ENCODE measurements at regions of chr6 and their contacts with region 1.

Region 1: DNA sequence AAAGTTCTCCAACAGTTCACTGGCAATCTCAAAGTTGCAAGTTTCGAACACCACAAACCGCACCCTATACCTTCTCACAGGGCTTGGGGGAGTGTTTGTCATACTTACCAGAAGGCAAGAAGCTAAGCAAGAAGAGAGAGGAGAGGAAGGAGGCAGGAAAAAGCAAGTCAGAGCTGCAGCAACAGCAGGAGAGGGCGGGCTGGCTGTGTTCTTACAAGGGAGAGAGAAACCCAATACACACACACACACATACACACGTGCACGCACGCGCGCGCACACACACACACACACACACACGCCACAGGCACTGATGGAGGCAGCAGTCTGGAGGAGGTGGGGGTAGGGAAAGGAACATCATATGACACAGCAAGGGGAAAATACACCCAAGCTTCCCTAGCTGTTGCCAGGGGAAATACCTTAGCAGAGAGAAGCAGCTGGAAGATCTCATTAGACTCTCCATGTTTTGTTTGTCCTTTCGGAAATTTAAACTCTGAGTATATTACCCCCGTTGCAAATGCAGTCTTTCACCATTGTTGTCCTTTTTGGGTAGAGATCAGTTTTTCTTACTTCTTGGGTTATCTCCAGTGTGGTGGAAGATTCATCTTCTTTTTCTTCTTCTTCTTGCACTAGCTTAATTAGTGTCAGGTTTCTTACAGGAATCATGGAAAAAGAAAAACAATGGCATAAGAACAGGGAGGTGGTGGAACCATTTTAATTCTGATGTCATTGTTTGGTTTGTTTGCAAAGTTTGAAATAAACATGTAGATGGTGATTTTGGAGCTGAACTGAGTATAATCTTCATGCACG is at the start of gene TXLNB:
- DNase-seq: peak; percentile 64 to 89
- ATAC-seq: peak; percentile 76 to 86 (median 80)
- H3K4me3 ChIP-seq: peak within 1 kb of the TSS; percentile 14
- H3K4me3 Mint-ChIP-seq: peak within 1 kb of the TSS; percentile 96
- H3K27ac ChIP-seq: peak within 1 kb of the TSS; percentile 97
- H3K27ac Mint-ChIP-seq: peak within 1 kb of the TSS; percentile 93 to 99
- H3K4me1 ChIP-seq: peaks cover 28% of the 10 kb centered on the region
- H3K4me1 Mint-ChIP-seq: peaks cover 34 to 46% of the 10 kb centered on the region in 2 donors
- H3K27me3 ChIP-seq: no peaks in the 10 kb centered on the region
- H3K27me3 Mint-ChIP-seq: no peaks in the 10 kb centered on the region
- CTCF ChIP-seq: no peak
- total RNA-seq, gene TXLNB: 0.24 to 0.93 (median 0.50) TPM

Region 2: GRCh38 chr6:139028658-139029469 is 263.2 kb before region 1 on chr6 and contains the start of gene ABRACL:
- intact Hi-C with region 1: loop called (anchors 5 kb)
- DNase-seq: peak; percentile 47 to 88
- ATAC-seq: peak; percentile 64 to 80 (median 68)
- H3K4me3 ChIP-seq: peak within 1 kb of the TSS; percentile 99
- H3K4me3 Mint-ChIP-seq: no peak within 1 kb of the TSS
- H3K27ac ChIP-seq: peak within 1 kb of the TSS; percentile 91
- H3K27ac Mint-ChIP-seq: peak within 1 kb of the TSS in 1 of 2 donors; percentile 65
- H3K4me1 ChIP-seq: peaks cover 23% of the 10 kb centered on the region
- H3K4me1 Mint-ChIP-seq: peaks cover 24 to 32% of the 10 kb centered on the region in 2 donors
- H3K27me3 ChIP-seq: no peaks in the 10 kb centered on the region
- H3K27me3 Mint-ChIP-seq: no peaks in the 10 kb centered on the region
- CTCF ChIP-seq: no peak
- total RNA-seq, gene ABRACL: 36.4 to 39.9 (median 37.5) TPM

Region 3: DNA sequence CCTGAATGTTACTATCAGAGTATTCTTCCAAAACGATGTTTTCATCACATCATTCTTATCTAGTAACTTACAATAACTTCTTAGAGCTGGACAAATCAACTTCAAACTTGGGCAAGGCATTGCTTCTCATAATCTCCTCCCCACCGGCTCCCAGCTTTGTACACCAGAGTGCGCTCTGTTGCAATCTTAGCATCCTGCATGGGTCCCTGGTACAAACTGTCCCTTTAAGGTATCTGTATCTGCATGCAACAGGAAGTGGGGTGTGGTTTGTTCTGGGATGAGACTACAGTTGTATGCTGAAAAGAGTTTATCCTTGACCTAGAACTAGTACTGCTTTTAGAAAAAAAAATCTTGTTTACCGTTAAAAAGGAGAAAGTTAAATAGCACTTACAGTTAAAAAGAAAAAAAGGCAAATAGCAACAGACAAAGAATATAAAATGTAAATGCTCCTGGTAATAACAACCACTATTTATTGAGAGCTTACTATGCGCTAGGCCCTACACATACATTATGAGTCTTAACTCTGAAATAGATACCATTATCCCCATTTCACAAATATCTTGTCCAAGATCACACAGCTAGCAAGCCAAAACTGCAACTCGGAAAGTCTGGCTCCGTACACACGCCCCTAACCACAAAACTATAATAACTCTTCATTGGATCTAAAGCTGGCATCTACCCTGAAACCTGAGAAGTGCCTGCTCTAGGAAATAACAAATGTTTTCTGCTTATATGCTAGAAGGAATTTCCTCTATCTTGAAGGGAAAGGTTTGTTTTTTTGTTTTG is 166.9 kb before region 1 on chr6:
- intact Hi-C with region 1: loop called (anchors 5 kb)
- DNase-seq: peak; percentile 54 to 93
- ATAC-seq: peak; percentile 99 to 100 (median 99)
- H3K4me3 ChIP-seq: no peak overlapping the region
- H3K4me3 Mint-ChIP-seq: peak overlapping the region; percentile 81
- H3K27ac ChIP-seq: peak overlapping the region; percentile 42
- H3K27ac Mint-ChIP-seq: peak overlapping the region; percentile 84 to 91
- H3K4me1 ChIP-seq: peaks cover 17% of the 10 kb centered on the region
- H3K4me1 Mint-ChIP-seq: peaks cover 25% of the 10 kb centered on the region in 2 donors
- H3K27me3 ChIP-seq: no peaks in the 10 kb centered on the region
- H3K27me3 Mint-ChIP-seq: no peaks in the 10 kb centered on the region
- CTCF ChIP-seq: peak; percentile 67

Region 4: DNA sequence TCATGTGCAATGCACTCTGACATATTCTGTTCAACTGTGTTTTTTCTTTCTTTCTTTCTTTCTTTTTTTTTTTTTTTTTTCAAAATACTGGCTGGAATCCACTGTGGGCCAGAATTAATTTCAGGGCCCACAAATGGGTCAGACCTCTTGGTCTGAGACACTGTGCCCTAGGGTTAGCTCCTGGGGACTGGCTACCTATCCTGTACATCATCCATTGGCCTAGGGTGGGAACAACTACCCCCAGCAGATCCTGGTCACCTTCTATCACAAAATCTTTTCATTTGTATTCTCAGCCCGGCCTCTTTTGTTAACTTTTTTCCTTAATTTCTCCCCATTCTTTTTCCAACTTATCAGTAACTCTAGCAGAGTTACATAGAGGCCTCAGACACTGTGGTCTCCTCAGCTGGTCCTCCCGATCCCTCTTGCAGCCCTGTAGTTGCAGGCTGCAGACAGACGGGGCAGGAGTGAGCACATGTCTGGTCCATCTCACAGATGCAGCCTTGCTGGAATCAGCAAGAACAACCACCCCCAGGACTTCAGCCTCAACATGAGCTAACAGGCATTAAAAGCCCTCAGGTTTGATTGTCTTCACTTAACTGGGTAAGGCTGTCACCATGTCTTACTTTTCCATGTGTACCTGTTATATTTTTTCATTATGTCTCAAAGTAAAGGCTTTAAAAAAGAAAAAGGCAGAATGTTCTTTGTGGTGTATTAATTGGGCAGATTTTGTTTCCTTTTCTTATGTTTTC is 41.5 kb before region 1 on chr6:
- intact Hi-C with region 1: loop called (anchors 2 kb)
- DNase-seq: peak; percentile 34 to 80
- ATAC-seq: peak; percentile 90 to 100 (median 99)
- H3K4me3 ChIP-seq: no peak overlapping the region
- H3K4me3 Mint-ChIP-seq: no peak overlapping the region
- H3K27ac ChIP-seq: peak overlapping the region; percentile 13
- H3K27ac Mint-ChIP-seq: peak overlapping the region; percentile 37 to 47
- H3K4me1 ChIP-seq: peaks cover 5% of the 10 kb centered on the region
- H3K4me1 Mint-ChIP-seq: peaks cover 21 to 26% of the 10 kb centered on the region in 2 donors
- H3K27me3 ChIP-seq: no peaks in the 10 kb centered on the region
- H3K27me3 Mint-ChIP-seq: no peaks in the 10 kb centered on the region
- CTCF ChIP-seq: peak; percentile 67

Region 5: GRCh38 chr6:139323511-139324300 is 31.7 kb after region 1 on chr6:
- intact Hi-C with region 1: loop called (anchors 1 kb)
- DNase-seq: peak; percentile 70 to 90
- ATAC-seq: peak; percentile 79 to 85 (median 82)
- H3K4me3 ChIP-seq: peak overlapping the region; percentile 34
- H3K4me3 Mint-ChIP-seq: peak overlapping the region; percentile 90
- H3K27ac ChIP-seq: peak overlapping the region; percentile 92
- H3K27ac Mint-ChIP-seq: peak overlapping the region; percentile 98
- H3K4me1 ChIP-seq: peaks cover 29% of the 10 kb centered on the region
- H3K4me1 Mint-ChIP-seq: peaks cover 36 to 39% of the 10 kb centered on the region in 2 donors
- H3K27me3 ChIP-seq: no peaks in the 10 kb centered on the region
- H3K27me3 Mint-ChIP-seq: no peaks in the 10 kb centered on the region
- CTCF ChIP-seq: no peak